ENCODE measurements at regions of chr11 and their contacts with region 1.

Region 1: DNA sequence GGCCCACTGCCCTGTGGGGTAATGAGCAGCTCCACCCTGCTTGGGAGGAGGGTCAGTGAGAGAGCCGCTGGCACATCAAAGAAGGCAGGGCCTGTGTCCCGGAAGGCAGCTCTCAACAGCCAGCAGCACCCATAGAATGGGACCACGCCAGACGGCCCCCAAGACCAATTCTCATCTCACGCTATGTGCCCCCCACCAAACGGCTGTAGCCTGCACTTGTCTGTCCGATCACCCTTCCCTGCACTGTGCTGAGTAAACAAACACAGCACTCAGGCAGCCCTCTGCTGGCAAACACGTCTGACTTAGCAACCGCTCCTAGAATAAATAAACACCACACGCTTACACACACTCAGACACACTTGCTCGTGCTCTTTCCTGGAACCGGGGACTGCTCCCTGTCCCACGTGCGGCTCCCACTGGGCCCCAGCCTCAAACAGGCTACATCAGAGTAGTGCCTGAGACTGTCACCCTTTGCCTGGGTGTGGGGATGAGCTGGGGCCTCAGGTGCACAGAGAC is 53.2 kb upstream of the CDON start:
- DNase-seq: peak; percentile 41 to 67
- ATAC-seq: peak; percentile 51 to 72
- H3K4me3 ChIP-seq: no peak overlapping the region
- H3K27ac ChIP-seq: peak overlapping the region; percentile 77 to 87 (median 83)
- H3K4me1 ChIP-seq: peaks cover 47 to 55% of the 10 kb centered on the region in 2 donors
- H3K27me3 ChIP-seq: no peaks in the 10 kb centered on the region
- CTCF ChIP-seq: peak in 4 of 5 experiments; percentile 17 to 33 (median 30)
- POLR2A ChIP-seq: no peak

Region 2: GRCh38 chr11:125902927-125903710 is 212.8 kb before region 1 on chr11 and contains the start of gene PUS3:
- in situ Hi-C with region 1: no loop called
- intact Hi-C with region 1: loop called (anchors 5 kb)
- DNase-seq: peak; percentile 74 to 87
- ATAC-seq: peak; percentile 91 to 98
- H3K4me3 ChIP-seq: peak within 1 kb of the TSS; percentile 62 to 85 (median 74)
- H3K27ac ChIP-seq: peak within 1 kb of the TSS; percentile 83 to 88 (median 84)
- H3K4me1 ChIP-seq: peaks cover 11 to 24% of the 10 kb centered on the region in 2 donors
- H3K27me3 ChIP-seq: peaks cover 24 to 28% (median 25%) of the 10 kb centered on the region in 3 donors
- CTCF ChIP-seq: no peak
- POLR2A ChIP-seq: peak; percentile 9 to 27
- total RNA-seq, gene PUS3: 7.0 to 13.5 (median 11.7) TPM

Region 3: GRCh38 chr11:125941619-125942611 is 174.0 kb before region 1 on chr11:
- in situ Hi-C with region 1: no loop called
- intact Hi-C with region 1: loop called (anchors 1 kb)
- DNase-seq: peak in 1 of 2 donors; percentile 26
- ATAC-seq: peak; percentile 25 to 62
- H3K4me3 ChIP-seq: peak overlapping the region in 1 of 4 donors; percentile 10
- H3K27ac ChIP-seq: peak overlapping the region in 2 of 4 donors; percentile 26 to 54
- H3K4me1 ChIP-seq: peaks cover 0 to 6% of the 10 kb centered on the region in 2 donors
- H3K27me3 ChIP-seq: no peaks in the 10 kb centered on the region
- CTCF ChIP-seq: peak in 4 of 5 experiments; percentile 28 to 76 (median 63)
- POLR2A ChIP-seq: no peak

Region 4: GRCh38 chr11:126194121-126194543 is 78.3 kb after region 1 on chr11:
- in situ Hi-C with region 1: loop called in 1 of 4 experiments (anchors 10 kb)
- intact Hi-C with region 1: loop called (anchors 5 kb)
- DNase-seq: no peak
- ATAC-seq: peak in 1 of 2 donors; percentile 21
- H3K4me3 ChIP-seq: no peak overlapping the region
- H3K27ac ChIP-seq: peak overlapping the region in 3 of 4 donors; percentile 36 to 93 (median 37)
- H3K4me1 ChIP-seq: peaks cover 48 to 64% of the 10 kb centered on the region in 2 donors
- H3K27me3 ChIP-seq: no peaks in the 10 kb centered on the region
- CTCF ChIP-seq: peak; percentile 62 to 73 (median 71)
- POLR2A ChIP-seq: no peak

Region 5: DNA sequence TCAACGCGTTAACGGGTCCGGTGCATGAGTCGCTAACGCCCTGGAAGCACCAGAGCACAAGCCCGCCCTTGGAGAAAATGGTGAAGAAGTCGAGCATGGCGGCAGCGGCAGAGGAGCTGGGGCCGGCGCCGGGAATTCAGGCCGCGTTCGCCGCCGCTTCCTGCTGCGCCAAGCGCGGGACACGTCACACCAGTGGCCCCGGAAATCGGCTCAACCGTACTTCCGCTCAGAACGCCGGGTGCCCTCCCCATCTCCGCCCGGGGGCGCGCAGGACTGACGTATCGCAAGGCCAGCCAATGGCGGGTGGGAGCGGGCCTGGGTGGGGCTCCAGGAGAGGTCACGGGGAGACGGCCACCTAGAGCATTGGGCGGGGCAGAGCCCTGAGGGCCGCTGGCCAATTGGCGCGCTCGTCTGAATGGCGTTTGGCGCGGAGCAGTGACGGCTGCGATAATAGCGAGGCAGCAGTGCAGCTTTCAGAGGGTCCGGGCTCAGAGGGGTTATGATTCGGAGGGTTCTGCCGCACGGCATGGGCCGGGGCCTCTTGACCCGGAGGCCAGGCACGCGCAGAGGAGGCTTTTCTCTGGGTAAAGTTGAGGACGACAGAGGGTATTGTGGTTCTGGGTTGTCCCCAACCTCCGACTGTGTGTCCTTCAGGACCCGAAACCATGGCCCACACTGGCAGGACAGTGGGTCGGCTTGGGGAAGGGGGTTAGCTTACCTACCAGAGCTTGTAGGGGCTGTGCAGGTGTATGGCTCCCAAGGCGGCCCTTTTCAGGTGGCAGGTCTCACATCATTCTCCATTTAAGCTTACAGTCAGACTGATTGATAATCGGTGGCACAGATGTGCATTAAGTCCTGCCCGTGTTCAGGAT is 153.1 kb after region 1 on chr11 and contains the starts of genes FOXRED1 and SRPRA:
- in situ Hi-C with region 1: no loop called
- intact Hi-C with region 1: loop called (anchors 5 kb)
- DNase-seq: peak; percentile 99 to 100
- ATAC-seq: peak; percentile 91 to 94
- H3K4me3 ChIP-seq: peak within 1 kb of the TSS; percentile 82 to 99 (median 88)
- H3K27ac ChIP-seq: peak within 1 kb of the TSS; percentile 87 to 96 (median 91)
- H3K4me1 ChIP-seq: peaks cover 22% of the 10 kb centered on the region in 2 donors
- H3K27me3 ChIP-seq: no peaks in the 10 kb centered on the region
- CTCF ChIP-seq: peak in 1 of 5 experiments; percentile 8
- POLR2A ChIP-seq: peak; percentile 76 to 86
- total RNA-seq, gene FOXRED1: 12.5 to 20.8 (median 16.2) TPM
- total RNA-seq, gene SRPRA: 72.3 to 101 (median 79.4) TPM